Activated naive CD8-positive, alpha-beta T cell treated with anti-CD3 and anti-CD28 coated beads, Interleukin-2, amount 10 ng/mL, durations not matched to agents 7 days and 5 days (primary cell): ENCODE measurements at regions of chr1 and their contacts with region 1.

Region 1: GRCh38 chr1:78004719-78005447 is at the start of gene DNAJB4:
- DNase-seq: no peak
- ATAC-seq: peak; percentile 99
- H3K4me3 Mint-ChIP-seq: peak within 1 kb of the TSS; percentile 95
- H3K27ac Mint-ChIP-seq: peak within 1 kb of the TSS; percentile 96
- H3K4me1 Mint-ChIP-seq: peaks cover 33% of the 10 kb centered on the region
- H3K27me3 Mint-ChIP-seq: no peaks in the 10 kb centered on the region
- total RNA-seq, gene DNAJB4: 15.2 to 16.4 TPM

Region 2: DNA sequence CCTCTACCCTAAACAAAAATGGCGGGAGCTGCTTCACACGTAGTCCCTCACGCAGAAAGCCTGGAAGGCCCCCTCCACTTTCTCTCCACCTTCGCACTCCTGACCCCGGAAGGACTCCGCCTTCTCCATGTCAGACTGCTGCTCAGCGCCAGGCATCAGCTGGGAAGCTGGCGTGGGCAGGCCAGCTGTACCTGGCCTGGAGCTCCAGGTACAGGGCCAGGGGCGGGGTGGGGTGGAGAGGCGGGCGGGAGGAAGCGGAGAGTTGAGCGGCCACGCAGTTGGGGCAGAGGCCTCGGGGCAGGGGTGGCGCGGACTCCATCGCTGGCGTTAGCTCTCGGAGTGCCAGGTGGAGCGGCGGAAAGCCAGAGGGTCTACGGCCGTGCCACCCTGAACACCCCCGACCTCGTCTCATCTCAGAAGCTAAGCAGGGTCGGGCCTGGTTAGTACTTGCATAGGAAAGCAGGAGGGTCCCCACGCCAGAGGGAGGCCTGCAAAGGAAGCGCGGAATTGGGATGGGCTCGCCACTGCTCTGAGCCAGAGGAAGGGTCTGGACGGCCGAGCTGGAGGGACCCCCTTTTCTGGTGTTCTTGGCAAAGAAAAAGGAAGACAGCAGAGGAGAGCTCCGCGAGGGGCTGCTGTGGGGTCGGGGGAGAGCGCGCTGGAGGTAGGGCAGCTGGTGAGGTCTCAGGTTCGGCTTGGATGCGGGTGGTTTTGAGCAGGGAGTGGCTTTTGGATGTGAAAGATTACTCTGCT is 225.2 kb before region 1 on chr1 and contains the start of gene MIGA1:
- POLR2A ChIA-PET with region 1: interaction called, 16 read pairs
- DNase-seq: peak; percentile 75
- ATAC-seq: peak; percentile 98
- H3K4me3 Mint-ChIP-seq: peak within 1 kb of the TSS; percentile 98
- H3K27ac Mint-ChIP-seq: peak within 1 kb of the TSS; percentile 86
- H3K4me1 Mint-ChIP-seq: peaks cover 25% of the 10 kb centered on the region
- H3K27me3 Mint-ChIP-seq: peaks cover 3% of the 10 kb centered on the region
- total RNA-seq, gene MIGA1: 13.6 to 14.3 TPM

Region 3: DNA sequence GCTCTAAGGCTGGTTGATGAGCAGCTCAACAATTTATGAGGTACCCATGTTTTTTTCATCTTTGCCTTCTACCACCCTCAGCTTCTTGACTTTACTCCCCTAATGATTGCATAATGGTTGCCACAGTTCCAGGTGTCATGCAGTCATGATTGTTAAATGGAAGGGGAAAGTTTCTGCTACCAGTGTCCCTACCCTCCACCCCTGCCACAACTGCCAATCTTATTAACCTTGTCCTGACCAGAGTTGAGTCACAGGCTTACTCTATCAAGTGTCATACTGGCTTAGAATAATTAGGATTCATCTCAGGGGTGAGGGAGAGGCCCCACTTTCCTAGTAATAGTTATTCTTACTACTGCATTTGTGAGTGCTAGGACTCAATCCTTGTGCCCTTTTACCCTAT is 18.1 kb before region 1 on chr1:
- POLR2A ChIA-PET with region 1: interaction called, 224 read pairs
- DNase-seq: no peak
- ATAC-seq: no peak
- H3K4me3 Mint-ChIP-seq: no peak overlapping the region
- H3K27ac Mint-ChIP-seq: no peak overlapping the region
- H3K4me1 Mint-ChIP-seq: peaks cover 21% of the 10 kb centered on the region
- H3K27me3 Mint-ChIP-seq: no peaks in the 10 kb centered on the region

Region 4: DNA sequence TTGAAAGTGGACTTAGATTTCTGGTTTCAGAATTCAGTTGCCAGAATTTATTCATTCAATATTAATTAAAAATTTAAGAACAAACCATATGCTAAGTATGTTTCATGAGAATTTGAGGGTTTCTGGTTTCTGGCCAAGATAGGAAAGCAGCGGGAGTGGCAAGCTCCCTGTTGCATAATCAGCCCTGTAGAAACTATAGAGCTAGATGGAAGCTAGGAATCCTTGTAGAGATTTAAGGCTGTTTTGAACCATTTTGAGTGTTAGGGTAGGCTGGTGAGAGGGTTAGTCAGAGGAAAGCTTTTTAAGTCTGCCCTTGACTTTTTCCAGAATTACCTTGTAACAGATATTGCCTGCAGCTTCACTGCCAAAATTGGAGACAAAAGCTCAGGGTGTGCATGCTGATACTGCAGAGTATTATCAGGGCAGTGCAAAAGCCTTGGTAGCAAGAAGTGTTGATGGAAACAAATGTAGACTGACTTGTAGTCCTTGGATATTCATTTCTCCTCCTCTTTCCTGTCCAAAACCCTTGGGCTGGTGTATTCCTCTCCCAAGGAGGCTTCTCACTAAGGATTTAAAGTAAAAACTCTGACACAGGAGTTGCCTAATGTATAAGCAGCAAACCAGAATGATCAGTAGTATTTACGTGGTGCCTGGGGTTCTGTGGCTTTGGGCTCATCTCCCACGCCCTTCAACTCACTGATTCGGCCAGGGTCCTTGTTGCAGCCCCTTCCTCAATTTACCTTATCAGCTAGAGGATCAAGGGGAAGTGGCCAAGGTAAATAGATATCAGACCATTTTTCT is 28.3 kb after region 1 on chr1:
- POLR2A ChIA-PET with region 1: no interaction called
- DNase-seq: no peak
- ATAC-seq: no peak
- H3K4me3 Mint-ChIP-seq: no peak overlapping the region
- H3K27ac Mint-ChIP-seq: no peak overlapping the region
- H3K4me1 Mint-ChIP-seq: no peaks in the 10 kb centered on the region
- H3K27me3 Mint-ChIP-seq: peaks cover 7% of the 10 kb centered on the region

Region 5: GRCh38 chr1:78045926-78046778 is 41.3 kb after region 1 on chr1 and contains the start of gene GIPC2:
- POLR2A ChIA-PET with region 1: interaction called, 10 read pairs
- DNase-seq: peak; percentile 56
- ATAC-seq: peak; percentile 68
- H3K4me3 Mint-ChIP-seq: peak within 1 kb of the TSS; percentile 77
- H3K27ac Mint-ChIP-seq: peak within 1 kb of the TSS; percentile 4
- H3K4me1 Mint-ChIP-seq: peaks cover 24% of the 10 kb centered on the region
- H3K27me3 Mint-ChIP-seq: peaks cover 32% of the 10 kb centered on the region
- total RNA-seq, gene GIPC2: 0.44 to 0.74 TPM